Naive thymus-derived CD8-positive, alpha-beta T cell (primary cell): ENCODE measurements at regions of chr21 and their contacts with region 1.

Region 1: GRCh38 chr21:34073032-34073869 is at the starts of genes MRPS6 and SLC5A3:
- DNase-seq: peak; percentile 38 to 84 (median 74)
- ATAC-seq: peak; percentile 68 to 71
- H3K4me3 Mint-ChIP-seq: peak within 1 kb of the TSS; percentile 92 to 98 (median 96)
- H3K27ac Mint-ChIP-seq: peak within 1 kb of the TSS; percentile 88 to 96 (median 92)
- H3K4me1 Mint-ChIP-seq: peaks cover 40 to 53% (median 44%) of the 10 kb centered on the region in 4 donors
- H3K27me3 Mint-ChIP-seq: no peaks in the 10 kb centered on the region
- polyA plus RNA-seq, gene MRPS6: 170 to 193 (median 181) TPM
- polyA plus RNA-seq, gene SLC5A3: 1.7 to 2.1 (median 1.9) TPM

Region 2: GRCh38 chr21:33789697-33790096 is 283.6 kb before region 1 on chr21:
- POLR2A ChIA-PET with region 1: no interaction called
- DNase-seq: no peak
- ATAC-seq: no peak
- H3K4me3 Mint-ChIP-seq: no peak overlapping the region
- H3K27ac Mint-ChIP-seq: no peak overlapping the region
- H3K4me1 Mint-ChIP-seq: no peaks in the 10 kb centered on the region
- H3K27me3 Mint-ChIP-seq: no peaks in the 10 kb centered on the region

Region 3: GRCh38 chr21:33924079-33924765 is 149.0 kb before region 1 on chr21:
- POLR2A ChIA-PET with region 1: interaction called, 18 read pairs
- DNase-seq: peak; percentile 73 to 93 (median 86)
- ATAC-seq: peak; percentile 93 to 97
- H3K4me3 Mint-ChIP-seq: peak overlapping the region in 5 of 10 donors; percentile 1 to 68 (median 43)
- H3K27ac Mint-ChIP-seq: peak overlapping the region; percentile 25 to 94 (median 75)
- H3K4me1 Mint-ChIP-seq: peaks cover 3 to 15% (median 11%) of the 10 kb centered on the region in 4 donors
- H3K27me3 Mint-ChIP-seq: no peaks in the 10 kb centered on the region

Region 4: GRCh38 chr21:33931799-33932390 is 141.4 kb before region 1 on chr21:
- POLR2A ChIA-PET with region 1: interaction called, 25 read pairs
- DNase-seq: peak in 1 of 10 donors; percentile 77
- ATAC-seq: peak; percentile 11 to 24
- H3K4me3 Mint-ChIP-seq: peak overlapping the region; percentile 92 to 100 (median 98)
- H3K27ac Mint-ChIP-seq: peak overlapping the region; percentile 97 to 100 (median 100)
- H3K4me1 Mint-ChIP-seq: peaks cover 17 to 49% (median 40%) of the 10 kb centered on the region in 4 donors
- H3K27me3 Mint-ChIP-seq: no peaks in the 10 kb centered on the region

Region 5: DNA sequence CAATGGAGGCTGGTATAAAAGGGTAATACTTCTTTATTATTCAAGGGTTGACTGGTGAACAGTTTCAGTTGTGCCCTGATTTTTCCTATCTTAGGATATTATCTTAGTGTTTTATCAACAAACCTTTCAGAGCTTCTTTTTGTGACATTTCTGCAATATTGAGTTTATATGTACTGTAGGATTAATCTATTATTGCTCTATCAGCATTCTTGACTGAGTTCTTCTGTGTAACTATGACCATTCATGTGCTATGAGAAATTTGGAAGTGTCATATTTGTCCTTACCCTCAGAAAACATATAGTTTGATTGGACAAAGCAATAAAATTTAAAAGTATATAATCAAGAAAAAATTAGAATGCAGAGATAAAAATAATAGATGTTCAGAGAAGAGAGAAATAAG is 25.4 kb before region 1 on chr21:
- POLR2A ChIA-PET with region 1: no interaction called
- DNase-seq: no peak
- ATAC-seq: no peak
- H3K4me3 Mint-ChIP-seq: no peak overlapping the region
- H3K27ac Mint-ChIP-seq: no peak overlapping the region
- H3K4me1 Mint-ChIP-seq: peaks cover 0 to 5% (median under 1%) of the 10 kb centered on the region in 4 donors
- H3K27me3 Mint-ChIP-seq: no peaks in the 10 kb centered on the region

Region 6: DNA sequence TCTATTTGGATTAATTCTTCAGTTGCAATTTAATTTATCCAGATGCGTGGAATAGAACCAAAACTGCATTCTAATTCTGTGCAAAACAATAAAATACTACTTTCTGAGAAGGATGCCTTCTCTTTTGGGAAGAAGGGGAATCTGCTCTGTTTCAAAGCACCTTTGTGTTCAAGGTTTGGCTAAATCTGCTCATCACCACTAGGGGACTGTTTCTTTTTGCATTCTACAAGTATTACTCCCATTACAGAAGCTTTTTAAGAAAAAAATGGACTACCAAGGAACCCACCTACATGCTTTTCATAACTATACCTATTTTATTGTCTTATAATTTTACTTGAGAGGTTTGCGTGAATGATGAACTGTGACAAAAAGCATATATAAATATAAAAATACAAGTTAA is 18.4 kb after region 1 on chr21:
- POLR2A ChIA-PET with region 1: interaction called, 11 read pairs
- DNase-seq: no peak
- ATAC-seq: no peak
- H3K4me3 Mint-ChIP-seq: peak overlapping the region in 4 of 10 donors; percentile 9 to 49 (median 22)
- H3K27ac Mint-ChIP-seq: peak overlapping the region in 6 of 10 donors; percentile 1 to 62 (median 53)
- H3K4me1 Mint-ChIP-seq: peaks cover 27 to 68% (median 61%) of the 10 kb centered on the region in 4 donors
- H3K27me3 Mint-ChIP-seq: no peaks in the 10 kb centered on the region